ENCODE measurements at regions of chr1 and their contacts with region 1.

Region 1: DNA sequence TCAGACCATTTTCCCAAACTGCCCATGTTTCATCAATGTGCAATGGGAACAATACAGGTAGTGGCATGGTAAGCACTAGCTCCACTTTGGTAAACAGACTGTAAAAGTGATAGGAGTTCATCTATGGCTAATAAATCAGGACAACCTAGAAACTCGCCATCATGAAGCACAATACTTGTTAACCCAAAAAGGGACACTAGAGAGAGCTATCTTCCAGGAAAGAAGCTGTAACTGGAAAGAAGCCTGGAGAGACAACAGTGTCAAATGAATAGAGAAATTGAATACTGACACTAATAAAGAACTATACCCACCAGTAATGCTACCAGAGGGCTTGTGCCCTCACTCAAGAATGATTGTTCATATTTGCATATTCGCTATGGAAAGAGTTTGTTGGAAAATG is 164.7 kb upstream of the RGS18 start:
- DNase-seq: peak; percentile 36
- ATAC-seq: peak; percentile 59
- H3K4me3 ChIP-seq: no peak overlapping the region
- H3K27ac ChIP-seq: no peak overlapping the region
- H3K4me1 ChIP-seq: no peaks in the 10 kb centered on the region
- H3K27me3 ChIP-seq: no peaks in the 10 kb centered on the region
- CTCF ChIP-seq: peak; percentile 50

Region 2: GRCh38 chr1:192311281-192311680 is 317.7 kb after region 1 on chr1:
- CTCF ChIA-PET with region 1: no interaction called
- POLR2A ChIA-PET with region 1: no interaction called
- intact Hi-C with region 1: loop called (anchors 1 kb)
- DNase-seq: peak; percentile 34
- ATAC-seq: peak; percentile 51
- H3K4me3 ChIP-seq: no peak overlapping the region
- H3K27ac ChIP-seq: no peak overlapping the region
- H3K4me1 ChIP-seq: no peaks in the 10 kb centered on the region
- H3K27me3 ChIP-seq: no peaks in the 10 kb centered on the region
- CTCF ChIP-seq: peak; percentile 54

Region 3: GRCh38 chr1:192445848-192446489 is 452.4 kb after region 1 on chr1:
- CTCF ChIA-PET with region 1: no interaction called
- POLR2A ChIA-PET with region 1: no interaction called
- intact Hi-C with region 1: loop called (anchors 1 kb)
- DNase-seq: peak; percentile 61
- ATAC-seq: no peak
- H3K4me3 ChIP-seq: no peak overlapping the region
- H3K27ac ChIP-seq: no peak overlapping the region
- H3K4me1 ChIP-seq: peaks cover 17% of the 10 kb centered on the region
- H3K27me3 ChIP-seq: no peaks in the 10 kb centered on the region
- CTCF ChIP-seq: peak; percentile 70

Measured in PC-3 (cell line).